Body of pancreas (tissue), 4 donors: ENCODE measurements at regions of chr10 and their contacts with region 1.

Region 1: GRCh38 chr10:121886997-121887622 is 40.7 kb downstream of the ATE1 start:
- DNase-seq: peak; percentile 59 to 75 (median 62)
- ATAC-seq: peak; percentile 78
- H3K4me3 ChIP-seq: no peak overlapping the region
- H3K27ac ChIP-seq: no peak overlapping the region
- H3K4me1 ChIP-seq: no peaks in the 10 kb centered on the region
- H3K27me3 ChIP-seq: no peaks in the 10 kb centered on the region
- CTCF ChIP-seq: peak; percentile 68 to 86 (median 75)
- POLR2A ChIP-seq: no peak

Region 2: GRCh38 chr10:121823993-121824463 is 63.1 kb before region 1 on chr10:
- intact Hi-C with region 1: loop called (anchors 5 kb)
- DNase-seq: no peak
- ATAC-seq: no peak
- H3K4me3 ChIP-seq: no peak overlapping the region
- H3K27ac ChIP-seq: no peak overlapping the region
- H3K4me1 ChIP-seq: no peaks in the 10 kb centered on the region
- H3K27me3 ChIP-seq: no peaks in the 10 kb centered on the region
- CTCF ChIP-seq: peak; percentile 44 to 69 (median 59)
- POLR2A ChIP-seq: no peak

Region 3: GRCh38 chr10:122577311-122577885 is 690.3 kb after region 1 on chr10:
- intact Hi-C with region 1: no loop called
- DNase-seq: no peak
- ATAC-seq: no peak
- H3K4me3 ChIP-seq: no peak overlapping the region
- H3K27ac ChIP-seq: no peak overlapping the region
- H3K4me1 ChIP-seq: no peaks in the 10 kb centered on the region
- H3K27me3 ChIP-seq: no peaks in the 10 kb centered on the region
- CTCF ChIP-seq: no peak
- POLR2A ChIP-seq: no peak